Caco-2 (cell line): ENCODE measurements at regions of chr6 and their contacts with region 1.

Region 1: DNA sequence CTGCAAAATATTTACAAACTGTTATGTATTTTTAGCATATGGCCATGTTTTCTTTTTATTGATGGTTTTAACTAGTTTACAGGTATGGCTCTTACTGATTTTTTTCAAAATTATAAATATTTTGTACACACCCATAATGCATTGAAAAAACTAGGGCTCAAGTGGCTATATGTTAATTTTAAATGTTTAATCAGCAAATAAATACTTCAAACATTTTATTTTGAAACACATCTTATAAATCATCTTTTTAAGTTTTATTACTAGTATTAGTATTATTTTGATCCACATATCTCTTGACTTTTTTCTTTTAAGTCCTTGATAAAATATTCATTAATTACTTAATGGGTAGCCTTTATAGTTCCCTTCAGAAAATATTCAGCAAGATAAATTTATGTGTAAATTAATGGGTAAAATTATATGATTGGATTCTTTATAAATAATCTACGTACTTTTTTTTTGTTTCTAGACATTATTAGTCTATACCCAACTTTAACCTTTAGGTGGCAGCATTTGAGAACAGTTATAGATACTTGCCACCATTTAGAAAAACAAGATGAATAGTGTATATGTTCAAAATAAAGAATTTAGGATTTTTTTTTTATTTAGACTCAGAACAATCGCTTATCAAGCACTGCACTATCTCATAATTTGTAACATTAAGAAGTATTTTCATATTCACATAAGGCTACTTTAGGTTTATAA is 241.9 kb downstream of the ADGRB3 start:
- DNase-seq: no peak
- H3K4me3 ChIP-seq: no peak overlapping the region
- H3K4me3 Mint-ChIP-seq: no peak overlapping the region
- H3K27ac Mint-ChIP-seq: no peak overlapping the region
- H3K4me1 ChIP-seq: no peaks in the 10 kb centered on the region
- H3K4me1 Mint-ChIP-seq: no peaks in the 10 kb centered on the region
- H3K27me3 ChIP-seq: no peaks in the 10 kb centered on the region
- H3K27me3 Mint-ChIP-seq: peaks cover 3% of the 10 kb centered on the region
- CTCF ChIP-seq: peak; percentile 14 to 36

Region 2: GRCh38 chr6:68634726-68635411 is 242.1 kb before region 1 on chr6 and contains the start of gene ADGRB3:
- CTCF ChIA-PET with region 1: no interaction called
- POLR2A ChIA-PET with region 1: no interaction called
- intact Hi-C with region 1: loop called (anchors 10 kb)
- DNase-seq: peak; percentile 58 to 67
- H3K4me3 ChIP-seq: peak within 1 kb of the TSS; percentile 51
- H3K4me3 Mint-ChIP-seq: peak within 1 kb of the TSS; percentile 82
- H3K27ac Mint-ChIP-seq: no peak within 1 kb of the TSS
- H3K4me1 ChIP-seq: no peaks in the 10 kb centered on the region; the same call in 1 of the 2 replicates
- H3K4me1 Mint-ChIP-seq: peaks cover 9% of the 10 kb centered on the region
- H3K27me3 ChIP-seq: no peaks in the 10 kb centered on the region; the same call in 1 of the 2 replicates
- H3K27me3 Mint-ChIP-seq: peaks cover 31% of the 10 kb centered on the region
- CTCF ChIP-seq: peak in 1 of 2 experiments; percentile 21
- total RNA-seq, gene ADGRB3: 0.18 TPM in 1 of 2 replicates, not detected in the other

Region 3: DNA sequence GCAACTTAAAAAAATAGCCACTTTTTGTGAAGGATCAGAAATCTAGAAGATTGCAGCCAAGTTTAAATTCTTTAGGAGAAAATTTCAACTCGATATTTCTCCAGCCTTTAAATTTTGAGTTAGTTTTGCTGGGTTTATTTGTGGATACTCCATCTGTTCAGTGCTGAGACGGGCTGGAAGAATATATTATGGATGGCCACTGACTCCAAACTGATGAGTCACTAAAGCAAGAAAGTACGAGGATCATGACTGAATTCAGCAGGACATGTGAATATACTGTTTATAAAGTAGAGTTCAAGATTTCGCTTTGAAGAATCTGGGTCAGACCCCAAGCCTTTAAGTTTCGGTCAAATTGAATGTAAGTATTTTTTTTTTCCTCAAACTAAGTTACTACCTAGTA is 42.4 kb before region 1 on chr6:
- CTCF ChIA-PET with region 1: no interaction called
- POLR2A ChIA-PET with region 1: no interaction called
- intact Hi-C with region 1: no loop called
- DNase-seq: no peak
- H3K4me3 ChIP-seq: no peak overlapping the region
- H3K4me3 Mint-ChIP-seq: no peak overlapping the region
- H3K27ac Mint-ChIP-seq: no peak overlapping the region
- H3K4me1 ChIP-seq: no peaks in the 10 kb centered on the region
- H3K4me1 Mint-ChIP-seq: no peaks in the 10 kb centered on the region
- H3K27me3 ChIP-seq: no peaks in the 10 kb centered on the region
- H3K27me3 Mint-ChIP-seq: peaks cover 3% of the 10 kb centered on the region
- CTCF ChIP-seq: no peak

Region 4: DNA sequence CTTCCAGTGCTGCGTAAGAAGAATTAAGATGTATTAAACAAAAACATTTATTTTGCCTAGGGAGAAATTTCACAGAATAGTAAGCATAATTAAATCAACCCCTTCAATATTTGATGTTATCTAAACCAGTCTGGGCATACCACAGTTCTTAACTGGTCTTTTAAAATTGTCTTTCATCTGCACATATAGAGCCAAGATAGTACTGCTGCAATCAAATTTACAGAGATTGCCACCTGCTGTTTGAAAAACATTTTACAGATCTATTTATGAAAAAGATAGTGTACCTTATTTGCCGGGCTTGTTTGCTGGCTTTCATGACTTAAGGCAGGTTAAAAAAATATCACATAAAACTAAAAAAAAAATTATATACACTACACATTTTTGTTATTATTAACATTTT is 81.4 kb after region 1 on chr6:
- CTCF ChIA-PET with region 1: no interaction called
- POLR2A ChIA-PET with region 1: no interaction called
- intact Hi-C with region 1: loop called (anchors 1 kb)
- DNase-seq: no peak
- H3K4me3 ChIP-seq: no peak overlapping the region
- H3K4me3 Mint-ChIP-seq: no peak overlapping the region
- H3K27ac Mint-ChIP-seq: no peak overlapping the region
- H3K4me1 ChIP-seq: no peaks in the 10 kb centered on the region
- H3K4me1 Mint-ChIP-seq: no peaks in the 10 kb centered on the region
- H3K27me3 ChIP-seq: no peaks in the 10 kb centered on the region
- H3K27me3 Mint-ChIP-seq: peaks cover 8% of the 10 kb centered on the region
- CTCF ChIP-seq: no peak

Region 5: GRCh38 chr6:68967549-68968300 is 90.8 kb after region 1 on chr6:
- CTCF ChIA-PET with region 1: no interaction called
- POLR2A ChIA-PET with region 1: no interaction called
- intact Hi-C with region 1: loop called (anchors 2 kb)
- DNase-seq: peak; percentile 41 to 69
- H3K4me3 ChIP-seq: no peak overlapping the region
- H3K4me3 Mint-ChIP-seq: no peak overlapping the region
- H3K27ac Mint-ChIP-seq: no peak overlapping the region
- H3K4me1 ChIP-seq: peaks cover 7% of the 10 kb centered on the region; the same call in 1 of the 2 replicates
- H3K4me1 Mint-ChIP-seq: peaks cover 10% of the 10 kb centered on the region
- H3K27me3 ChIP-seq: no peaks in the 10 kb centered on the region; the same call in 1 of the 2 replicates
- H3K27me3 Mint-ChIP-seq: peaks cover 8% of the 10 kb centered on the region
- CTCF ChIP-seq: peak; percentile 78 to 92

Region 6: GRCh38 chr6:69105288-69105687 is 228.3 kb after region 1 on chr6:
- CTCF ChIA-PET with region 1: no interaction called
- POLR2A ChIA-PET with region 1: no interaction called
- intact Hi-C with region 1: loop called (anchors 2 kb)
- DNase-seq: peak in 1 of 2 experiments; percentile 25
- H3K4me3 ChIP-seq: no peak overlapping the region
- H3K4me3 Mint-ChIP-seq: no peak overlapping the region
- H3K27ac Mint-ChIP-seq: peak overlapping the region; percentile 64
- H3K4me1 ChIP-seq: peaks cover 17% of the 10 kb centered on the region
- H3K4me1 Mint-ChIP-seq: peaks cover 7% of the 10 kb centered on the region
- H3K27me3 ChIP-seq: no peaks in the 10 kb centered on the region
- H3K27me3 Mint-ChIP-seq: no peaks in the 10 kb centered on the region
- CTCF ChIP-seq: no peak

Region 7: DNA sequence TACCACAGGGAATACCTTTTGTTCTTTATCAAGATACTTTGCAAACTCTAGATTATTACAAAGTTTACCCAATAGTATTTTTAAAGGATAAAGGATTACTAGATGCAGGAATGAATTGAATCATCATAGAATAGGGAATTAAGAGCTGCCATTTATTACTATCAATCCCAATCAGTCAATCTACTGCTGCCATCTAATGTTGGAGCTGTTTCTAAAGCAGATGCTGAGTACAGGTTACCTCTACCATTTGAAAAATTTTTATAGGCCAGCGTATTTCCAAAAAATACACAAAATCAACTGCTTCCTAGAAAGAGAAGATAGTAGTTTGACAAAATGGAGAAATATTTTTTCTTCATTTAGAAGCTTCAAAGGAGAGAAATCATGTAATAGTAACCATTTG is 278.5 kb after region 1 on chr6:
- CTCF ChIA-PET with region 1: no interaction called
- POLR2A ChIA-PET with region 1: no interaction called
- intact Hi-C with region 1: loop called (anchors 1 kb)
- DNase-seq: no peak
- H3K4me3 ChIP-seq: no peak overlapping the region
- H3K4me3 Mint-ChIP-seq: no peak overlapping the region
- H3K27ac Mint-ChIP-seq: no peak overlapping the region
- H3K4me1 ChIP-seq: no peaks in the 10 kb centered on the region
- H3K4me1 Mint-ChIP-seq: peaks cover 6% of the 10 kb centered on the region
- H3K27me3 ChIP-seq: no peaks in the 10 kb centered on the region
- H3K27me3 Mint-ChIP-seq: no peaks in the 10 kb centered on the region
- CTCF ChIP-seq: no peak

Region 8: DNA sequence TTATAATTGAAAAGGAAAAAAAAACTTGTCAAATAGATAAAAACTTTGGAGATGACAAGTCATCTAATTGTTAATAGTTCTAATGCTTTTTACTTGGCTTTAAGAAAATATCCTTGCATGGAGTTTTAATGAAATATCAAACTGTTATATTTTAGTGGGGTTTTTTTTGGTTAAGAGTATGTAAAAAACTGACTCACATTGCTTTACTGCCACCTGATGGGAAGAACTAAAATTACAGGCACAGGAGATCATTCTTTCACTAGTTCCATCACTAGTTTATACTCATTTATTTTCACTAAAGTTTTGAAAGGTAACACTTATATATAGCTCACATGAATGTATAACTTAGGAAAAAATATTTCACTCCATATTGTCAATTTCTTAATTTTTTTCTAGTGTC is 610.7 kb after region 1 on chr6:
- CTCF ChIA-PET with region 1: no interaction called
- POLR2A ChIA-PET with region 1: no interaction called
- intact Hi-C with region 1: loop called (anchors 10 kb)
- DNase-seq: no peak
- H3K4me3 ChIP-seq: no peak overlapping the region
- H3K4me3 Mint-ChIP-seq: no peak overlapping the region
- H3K27ac Mint-ChIP-seq: no peak overlapping the region
- H3K4me1 ChIP-seq: no peaks in the 10 kb centered on the region
- H3K4me1 Mint-ChIP-seq: no peaks in the 10 kb centered on the region
- H3K27me3 ChIP-seq: no peaks in the 10 kb centered on the region
- H3K27me3 Mint-ChIP-seq: peaks cover 6% of the 10 kb centered on the region
- CTCF ChIP-seq: peak in 1 of 2 experiments; percentile 8